ENCODE measurements at regions of chr11 and their contacts with region 1.

Region 1: DNA sequence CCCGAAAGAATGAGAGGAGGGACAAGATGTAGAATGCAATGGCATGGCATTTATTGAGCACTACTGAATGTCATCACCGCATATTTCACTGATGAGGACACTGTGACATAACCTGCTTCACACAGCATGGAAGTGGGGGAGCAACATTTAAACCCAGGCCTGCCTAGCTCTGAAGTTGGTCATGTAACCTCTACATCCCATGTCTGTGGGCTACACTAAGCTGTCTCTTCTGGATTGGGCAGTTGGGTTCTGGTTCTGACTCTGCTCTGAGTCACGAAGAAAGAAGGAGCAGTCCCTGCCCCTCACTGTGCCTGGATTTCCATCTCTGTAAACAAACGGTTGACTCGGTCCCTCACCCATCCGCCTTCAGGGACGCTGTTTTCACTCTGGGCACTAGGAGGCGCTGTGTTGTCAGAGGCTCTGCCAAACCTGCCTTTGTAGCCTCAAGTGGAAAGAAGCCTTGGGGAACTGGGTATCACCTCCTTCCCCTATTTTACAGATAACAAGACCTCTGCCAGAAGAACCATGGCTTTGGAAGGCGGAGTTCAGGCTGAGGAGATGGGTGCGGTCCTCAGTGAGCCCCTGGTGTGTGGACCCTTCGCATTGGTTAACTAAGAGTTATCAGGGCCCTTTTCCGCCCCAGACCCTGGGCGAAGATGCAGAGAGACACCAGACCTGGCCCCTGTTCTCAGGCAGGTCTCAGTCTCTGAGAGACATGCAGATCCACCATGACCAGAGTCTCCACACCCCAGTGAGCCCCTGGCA is 12.7 kb upstream of the ARHGEF17 start:
- DNase-seq: peak; percentile 86
- ATAC-seq: peak; percentile 84
- H3K4me3 Mint-ChIP-seq: no peak overlapping the region
- H3K27ac Mint-ChIP-seq: no peak overlapping the region
- H3K4me1 Mint-ChIP-seq: no peaks in the 10 kb centered on the region
- H3K27me3 Mint-ChIP-seq: no peaks in the 10 kb centered on the region

Region 2: GRCh38 chr11:73242251-73243079 is 52.9 kb before region 1 on chr11:
- CTCF ChIA-PET with region 1: no interaction called
- DNase-seq: peak; percentile 78
- ATAC-seq: peak; percentile 81
- H3K4me3 Mint-ChIP-seq: no peak overlapping the region
- H3K27ac Mint-ChIP-seq: no peak overlapping the region
- H3K4me1 Mint-ChIP-seq: peaks cover 6% of the 10 kb centered on the region
- H3K27me3 Mint-ChIP-seq: peaks cover 5% of the 10 kb centered on the region

Region 3: DNA sequence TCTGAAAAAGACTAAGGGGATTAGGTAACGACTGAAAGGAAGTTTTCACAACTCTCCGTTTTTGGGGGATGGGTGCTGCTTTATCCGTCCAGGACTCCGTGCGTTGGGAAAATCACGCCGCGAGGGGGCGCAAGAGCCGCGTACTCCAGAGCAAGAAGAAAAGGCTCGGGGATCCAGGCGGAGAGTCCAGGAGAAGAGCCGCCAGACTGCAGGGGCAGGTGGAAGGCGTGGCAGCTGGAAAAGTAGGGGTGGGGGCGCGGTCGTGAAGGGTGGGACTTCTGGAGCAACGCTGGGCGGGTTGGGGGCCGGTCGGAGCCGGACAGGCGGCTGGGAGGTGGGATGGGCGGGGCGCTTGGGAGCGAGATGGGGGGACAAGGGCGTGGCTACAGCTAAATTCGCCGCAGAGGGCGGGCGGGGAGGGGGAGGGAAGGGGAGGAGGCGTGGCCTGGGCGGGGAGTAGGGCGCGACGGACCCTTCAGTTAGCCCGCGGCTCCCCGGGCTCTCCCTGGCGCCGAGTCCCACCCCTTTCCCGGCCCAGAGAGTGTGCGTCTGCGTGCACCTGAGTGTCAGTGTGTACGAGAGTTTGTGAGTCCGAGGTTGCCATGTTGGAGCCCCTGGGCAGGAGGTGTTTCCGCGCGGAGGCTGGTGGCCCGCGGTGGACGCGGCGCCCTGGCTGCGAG is 12.1 kb after region 1 on chr11:
- CTCF ChIA-PET with region 1: interaction called, 41 read pairs
- DNase-seq: peak; percentile 93
- ATAC-seq: peak; percentile 76
- H3K4me3 Mint-ChIP-seq: peak overlapping the region; percentile 74
- H3K27ac Mint-ChIP-seq: peak overlapping the region; percentile 44
- H3K4me1 Mint-ChIP-seq: peaks cover 6% of the 10 kb centered on the region
- H3K27me3 Mint-ChIP-seq: peaks cover 33% of the 10 kb centered on the region

Region 4: GRCh38 chr11:73314117-73314961 is 18.9 kb after region 1 on chr11:
- CTCF ChIA-PET with region 1: interaction called, 41 read pairs
- DNase-seq: no peak
- ATAC-seq: peak; percentile 12
- H3K4me3 Mint-ChIP-seq: no peak overlapping the region
- H3K27ac Mint-ChIP-seq: no peak overlapping the region
- H3K4me1 Mint-ChIP-seq: peaks cover 16% of the 10 kb centered on the region
- H3K27me3 Mint-ChIP-seq: peaks cover 13% of the 10 kb centered on the region

Measured in activated CD8-positive, alpha-beta memory T cell treated with anti-CD3 and anti-CD28 coated beads, Interleukin-2, amount 10 ng/mL, durations not matched to agents 7 days and 5 days (primary cell).